Right ventricle myocardium inferior (tissue), 1 donor: ENCODE measurements at regions of chr3 and their contacts with region 1.

Region 1: DNA sequence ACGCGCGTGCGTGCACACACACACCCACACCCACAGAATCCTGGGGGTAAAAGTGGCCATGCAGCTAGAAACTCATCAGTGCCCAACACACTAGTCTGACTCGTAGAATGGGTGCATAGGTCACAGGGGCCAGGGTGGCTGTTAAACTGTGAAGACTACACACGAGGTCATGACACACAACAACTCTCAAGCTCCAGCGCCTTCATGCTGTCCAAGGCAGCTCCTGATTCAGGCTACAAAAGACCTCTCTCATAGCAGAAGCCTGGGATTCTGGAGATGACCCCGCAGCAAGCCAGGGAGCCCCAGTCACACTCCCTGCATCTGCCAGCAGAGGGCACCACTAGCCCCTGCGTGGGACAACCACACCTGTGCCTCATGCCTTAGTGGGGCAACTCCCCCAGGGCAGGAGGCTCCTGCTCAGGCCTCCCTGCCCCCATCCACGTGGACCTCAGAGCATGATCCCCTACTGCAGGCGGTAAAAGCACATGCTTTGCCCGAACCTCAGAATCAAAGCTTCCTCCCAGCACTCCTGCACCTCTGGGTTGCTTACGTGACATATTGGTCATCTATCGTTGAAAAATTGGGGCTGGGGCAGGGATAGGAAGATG is 93.1 kb downstream of the LRIG1 start:
- DNase-seq: peak; percentile 85
- ATAC-seq: peak; percentile 62

Region 2: GRCh38 chr3:66450390-66451022 is 42.8 kb after region 1 on chr3:
- intact Hi-C with region 1: loop called (anchors 5 kb)
- DNase-seq: no peak
- ATAC-seq: peak; percentile 52

Region 3: GRCh38 chr3:66665021-66665695 is 257.4 kb after region 1 on chr3:
- intact Hi-C with region 1: loop called (anchors 10 kb)
- DNase-seq: no peak
- ATAC-seq: peak; percentile 59

Region 4: GRCh38 chr3:66816090-66816761 is 408.5 kb after region 1 on chr3:
- intact Hi-C with region 1: loop called (anchors 2 kb)
- DNase-seq: no peak
- ATAC-seq: peak; percentile 75